Posterior cingulate gyrus (tissue), 11 donors: ENCODE measurements at regions of chr3 and their contacts with region 1.

Region 1: GRCh38 chr3:194070634-194071409 is 65.1 kb upstream of the HES1 start:
- DNase-seq: peak; percentile 37 to 94 (median 66)

Region 2: DNA sequence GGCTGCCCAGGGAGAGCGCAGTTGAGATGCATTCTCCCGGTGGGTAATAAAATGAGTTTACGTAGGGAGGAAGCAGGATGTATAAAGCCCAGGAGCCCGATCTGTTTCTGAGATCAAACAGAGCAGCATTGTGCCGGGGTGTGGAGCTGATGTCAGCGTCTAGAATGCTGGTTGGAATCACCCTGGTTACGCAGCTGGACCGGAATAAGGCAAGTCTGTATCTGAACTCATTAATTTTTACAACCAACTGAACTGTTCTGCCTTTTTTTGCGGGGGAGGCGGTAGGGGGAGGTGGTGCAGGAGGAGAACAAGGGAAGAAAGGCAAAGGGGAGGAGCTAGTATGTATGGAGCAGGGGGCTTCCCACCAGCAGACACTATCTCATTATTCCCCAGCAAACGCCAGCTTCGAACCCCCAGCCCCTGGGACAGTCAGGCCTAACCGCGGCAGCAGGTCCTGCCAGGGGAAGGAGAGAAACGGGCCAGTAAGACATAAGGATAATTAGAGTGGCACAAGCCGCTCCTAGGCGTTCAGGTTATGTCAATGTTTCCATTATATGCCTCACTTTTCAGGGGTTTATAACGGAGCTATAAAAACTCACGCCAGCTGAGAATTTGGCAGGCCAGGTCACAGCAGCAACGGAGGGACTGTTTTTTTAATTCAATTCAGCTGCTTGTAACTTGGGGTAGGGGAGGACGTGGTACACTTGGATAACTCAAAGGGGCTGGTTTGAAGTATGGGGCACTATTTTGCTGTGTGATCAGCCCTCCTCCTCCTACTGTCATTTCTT is 110.1 kb before region 1 on chr3:
- intact Hi-C with region 1: loop called (anchors 10 kb)
- DNase-seq: peak in 5 of 10 donors; percentile 23 to 48 (median 33)

Region 3: DNA sequence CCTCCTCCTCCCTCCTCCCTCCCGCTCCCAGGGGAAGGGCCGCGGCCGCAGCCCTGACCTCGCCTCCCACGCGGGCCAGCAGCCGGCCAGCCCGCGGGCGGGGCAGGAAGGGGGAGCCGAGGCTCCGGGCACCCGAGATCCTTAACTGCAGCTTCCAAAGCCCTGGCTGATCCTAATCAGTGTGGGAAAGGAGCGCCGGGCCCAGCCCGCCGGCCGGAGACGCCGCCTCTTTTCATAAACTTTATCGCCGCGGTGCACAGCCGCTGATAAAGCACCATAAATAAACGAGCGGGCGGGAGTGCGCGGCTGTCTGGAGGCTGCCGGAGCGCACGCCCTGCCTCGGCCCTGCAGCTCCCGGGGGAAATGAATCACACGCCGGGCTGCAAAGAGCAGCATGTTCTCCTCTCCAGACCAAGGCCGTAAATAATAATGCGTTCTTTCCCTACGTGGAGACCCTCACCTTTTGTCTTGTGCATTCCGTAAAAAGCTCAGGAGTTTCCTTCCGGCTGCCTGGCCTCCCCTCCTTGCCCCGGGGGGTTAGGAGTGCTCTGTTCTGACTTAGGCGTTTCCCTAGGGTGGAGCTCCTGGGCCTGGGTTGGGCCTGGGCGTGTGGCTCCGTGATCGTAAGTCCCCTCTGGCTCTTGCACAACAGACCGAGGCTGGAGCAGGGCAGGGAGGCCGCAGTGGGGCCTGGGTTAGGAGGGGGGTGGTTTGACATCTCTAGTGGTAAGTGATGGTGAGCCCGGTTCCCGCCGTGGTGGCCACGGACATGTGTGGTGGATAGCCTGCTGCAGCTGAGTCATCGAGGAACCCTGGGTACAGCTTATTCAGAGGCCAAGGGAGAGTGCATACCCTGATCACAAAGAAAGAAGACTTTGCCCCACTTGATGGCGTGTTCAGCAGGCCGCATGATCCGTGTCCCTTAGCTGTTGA is 67.4 kb before region 1 on chr3:
- intact Hi-C with region 1: loop called (anchors 10 kb)
- DNase-seq: peak in 6 of 10 donors; percentile 25 to 90 (median 58)

Region 4: GRCh38 chr3:194141415-194142155 is 70.8 kb after region 1 on chr3:
- intact Hi-C with region 1: loop called (anchors 2 kb)
- DNase-seq: peak; percentile 60 to 95 (median 80)